ENCODE measurements at regions of chr4 and their contacts with region 1.

Region 1: GRCh38 chr4:47469951-47470350 is 6.4 kb upstream of the COMMD8 start:
- DNase-seq: no peak
- H3K4me3 ChIP-seq: no peak overlapping the region
- H3K27ac ChIP-seq: no peak overlapping the region
- H3K4me1 ChIP-seq: no peaks in the 10 kb centered on the region
- H3K27me3 ChIP-seq: no peaks in the 10 kb centered on the region
- CTCF ChIP-seq: no peak
- POLR2A ChIP-seq: no peak

Region 2: DNA sequence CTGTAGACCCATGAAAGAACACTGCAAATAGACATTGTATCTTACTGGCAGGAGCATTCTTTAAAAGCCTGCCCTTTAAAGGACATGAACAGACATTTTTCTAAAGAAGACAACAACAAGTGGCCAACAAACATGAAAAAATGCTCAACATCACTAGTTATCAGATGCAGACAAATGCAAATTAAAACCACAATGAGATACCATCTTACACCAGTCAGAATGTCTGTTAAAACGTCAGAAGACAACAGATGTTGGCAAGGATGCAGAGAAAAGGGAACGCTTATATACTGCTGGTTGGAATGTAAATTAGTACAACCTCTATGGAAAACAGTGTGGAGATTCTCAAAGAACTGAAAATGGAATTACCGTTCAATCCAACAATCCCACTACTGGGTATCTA is 92.3 kb after region 1 on chr4:
- intact Hi-C with region 1: loop called (anchors 10 kb)
- DNase-seq: no peak
- H3K4me3 ChIP-seq: no peak overlapping the region
- H3K27ac ChIP-seq: no peak overlapping the region
- H3K4me1 ChIP-seq: no peaks in the 10 kb centered on the region
- H3K27me3 ChIP-seq: no peaks in the 10 kb centered on the region
- CTCF ChIP-seq: no peak
- POLR2A ChIP-seq: no peak

Measured in thyroid gland (tissue), 4 donors.